Endothelial cell of umbilical vein (primary cell): ENCODE measurements at regions of chr21 and their contacts with region 1.

Region 1: GRCh38 chr21:36156339-36156814 is 247 bp upstream of the DOP1B start:
- DNase-seq: peak; percentile 100
- H3K4me3 ChIP-seq: peak overlapping the region; percentile 62 to 92 (median 72)
- H3K27ac ChIP-seq: no peak overlapping the region
- H3K4me1 ChIP-seq: peaks cover 11% of the 10 kb centered on the region
- H3K27me3 ChIP-seq: peaks cover 2 to 5% of the 10 kb centered on the region in 2 experiments
- CTCF ChIP-seq: no peak
- POLR2A ChIP-seq: no peak

Region 2: GRCh38 chr21:36035381-36035791 is 121.0 kb before region 1 on chr21:
- CTCF ChIA-PET with region 1: no interaction called
- POLR2A ChIA-PET with region 1: no interaction called
- dilution Hi-C with region 1: no loop called
- intact Hi-C with region 1: no loop called
- DNase-seq: no peak
- H3K4me3 ChIP-seq: no peak overlapping the region
- H3K27ac ChIP-seq: no peak overlapping the region
- H3K4me1 ChIP-seq: no peaks in the 10 kb centered on the region
- H3K27me3 ChIP-seq: peaks cover 0 to 2% of the 10 kb centered on the region in 2 experiments
- CTCF ChIP-seq: no peak
- POLR2A ChIP-seq: no peak

Region 3: GRCh38 chr21:36135391-36136102 is 20.8 kb before region 1 on chr21:
- CTCF ChIA-PET with region 1: interaction called, 11 read pairs
- POLR2A ChIA-PET with region 1: interaction called, 8 read pairs
- dilution Hi-C with region 1: no loop called
- intact Hi-C with region 1: loop called (anchors 1 kb)
- DNase-seq: peak; percentile 76
- H3K4me3 ChIP-seq: peak overlapping the region; percentile 32 to 87 (median 77)
- H3K27ac ChIP-seq: peak overlapping the region; percentile 27
- H3K4me1 ChIP-seq: peaks cover 14% of the 10 kb centered on the region
- H3K27me3 ChIP-seq: no peaks in the 10 kb centered on the region
- CTCF ChIP-seq: no peak
- POLR2A ChIP-seq: no peak

Region 4: GRCh38 chr21:36209626-36210171 is 53.3 kb after region 1 on chr21:
- CTCF ChIA-PET with region 1: interaction called, 20 read pairs
- POLR2A ChIA-PET with region 1: no interaction called
- dilution Hi-C with region 1: no loop called
- intact Hi-C with region 1: loop called (anchors 1 kb)
- DNase-seq: peak; percentile 42
- H3K4me3 ChIP-seq: no peak overlapping the region
- H3K27ac ChIP-seq: peak overlapping the region; percentile 10
- H3K4me1 ChIP-seq: peaks cover 11% of the 10 kb centered on the region
- H3K27me3 ChIP-seq: no peaks in the 10 kb centered on the region
- CTCF ChIP-seq: peak; percentile 42 to 45
- POLR2A ChIP-seq: no peak

Region 5: DNA sequence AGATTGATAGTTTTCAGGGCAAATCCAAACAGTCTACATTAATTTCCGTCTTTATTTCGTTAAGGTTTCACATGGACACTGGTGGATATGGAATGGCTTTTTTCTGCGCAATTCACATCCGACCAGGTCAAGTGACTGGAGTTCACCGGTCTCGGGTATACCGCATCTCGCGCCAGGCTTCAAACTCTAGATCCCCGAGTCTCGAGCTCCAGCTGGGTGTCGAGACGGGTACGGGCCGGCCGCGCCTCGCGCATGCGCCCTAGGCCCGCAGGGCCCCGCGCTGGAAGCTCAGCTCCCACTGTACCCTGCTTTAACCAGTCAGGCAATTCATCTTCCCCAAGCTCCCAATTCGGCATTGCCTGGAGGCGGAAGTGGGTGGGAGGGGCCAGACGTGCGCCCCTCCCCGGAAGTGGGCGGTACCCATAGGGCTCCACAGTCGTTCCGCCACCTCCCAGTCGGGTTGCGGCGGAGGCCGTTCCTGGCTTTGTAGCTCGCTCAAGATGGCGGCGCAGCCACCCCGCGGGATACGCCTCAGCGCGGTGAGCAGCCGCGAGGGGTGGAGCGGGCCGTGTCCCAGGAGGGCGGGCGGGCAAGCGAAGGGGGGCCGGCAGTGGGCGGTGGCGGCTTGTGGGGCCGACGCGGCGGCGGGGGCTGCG is 163.5 kb after region 1 on chr21 and contains the start of gene MORC3:
- CTCF ChIA-PET with region 1: no interaction called
- POLR2A ChIA-PET with region 1: interaction called, 11 read pairs
- dilution Hi-C with region 1: no loop called
- intact Hi-C with region 1: loop called (anchors 1 kb)
- DNase-seq: peak; percentile 100
- H3K4me3 ChIP-seq: peak within 1 kb of the TSS; percentile 77 to 97 (median 95)
- H3K27ac ChIP-seq: peak within 1 kb of the TSS; percentile 83
- H3K4me1 ChIP-seq: peaks cover 19% of the 10 kb centered on the region
- H3K27me3 ChIP-seq: peaks cover 0 to 5% of the 10 kb centered on the region in 2 experiments
- CTCF ChIP-seq: no peak
- POLR2A ChIP-seq: peak; percentile 97
- total RNA-seq, gene MORC3: 20.0 and 25.3 TPM in 2 replicates

Region 6: GRCh38 chr21:36330904-36331303 is 174.5 kb after region 1 on chr21:
- CTCF ChIA-PET with region 1: interaction called, 10 read pairs
- POLR2A ChIA-PET with region 1: interaction called, 15 read pairs
- dilution Hi-C with region 1: no loop called
- intact Hi-C with region 1: no loop called
- DNase-seq: peak; percentile 64
- H3K4me3 ChIP-seq: no peak overlapping the region
- H3K27ac ChIP-seq: no peak overlapping the region
- H3K4me1 ChIP-seq: peaks cover 20% of the 10 kb centered on the region
- H3K27me3 ChIP-seq: no peaks in the 10 kb centered on the region
- CTCF ChIP-seq: peak; percentile 65 to 73
- POLR2A ChIP-seq: no peak